ENCODE measurements at regions of chr9 and their contacts with region 1.

Region 1: GRCh38 chr9:20526500-20527319 is 95.6 kb downstream of the MLLT3 start:
- DNase-seq: no peak
- CTCF ChIP-seq: no peak

Region 2: DNA sequence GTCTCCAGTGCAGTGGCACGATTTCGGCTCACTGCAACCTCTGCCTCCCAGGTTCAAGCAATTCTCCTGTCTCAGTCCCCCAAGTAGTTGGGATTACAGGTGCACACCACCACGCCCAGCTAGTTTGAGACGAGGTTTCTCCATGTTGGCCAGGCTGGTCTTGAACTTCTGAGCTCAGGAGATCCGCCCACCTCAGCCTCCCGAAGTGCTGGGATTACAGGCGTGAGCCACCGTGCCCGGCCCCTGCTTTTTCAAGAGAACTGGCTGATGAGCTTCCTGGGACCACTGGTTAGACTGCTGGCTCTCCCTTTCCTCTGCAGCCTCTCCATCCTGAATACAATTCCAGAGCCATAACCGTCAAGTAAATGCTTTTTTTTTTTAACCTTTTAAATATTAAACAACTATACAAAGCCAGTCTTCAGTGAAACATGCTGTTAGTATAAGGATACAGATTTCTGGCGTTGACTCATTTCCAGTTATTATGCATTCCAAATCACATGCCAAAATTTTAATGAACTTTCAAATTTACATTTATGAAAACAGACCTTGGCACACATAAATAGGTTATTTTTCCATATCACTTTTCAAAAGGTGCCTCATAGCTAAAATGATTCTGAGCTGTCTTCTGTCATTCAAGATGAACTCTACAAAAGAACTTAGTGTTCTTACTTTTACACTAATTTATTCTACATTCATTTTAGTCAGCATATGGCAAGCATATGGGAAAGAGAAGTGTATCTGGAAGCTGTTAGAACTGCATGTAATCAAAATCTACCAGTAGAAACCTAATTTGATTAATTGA is 20.4 kb before region 1 on chr9:
- CTCF ChIA-PET with region 1: interaction called, 14 read pairs
- POLR2A ChIA-PET with region 1: no interaction called
- DNase-seq: no peak
- CTCF ChIP-seq: no peak

Region 3: DNA sequence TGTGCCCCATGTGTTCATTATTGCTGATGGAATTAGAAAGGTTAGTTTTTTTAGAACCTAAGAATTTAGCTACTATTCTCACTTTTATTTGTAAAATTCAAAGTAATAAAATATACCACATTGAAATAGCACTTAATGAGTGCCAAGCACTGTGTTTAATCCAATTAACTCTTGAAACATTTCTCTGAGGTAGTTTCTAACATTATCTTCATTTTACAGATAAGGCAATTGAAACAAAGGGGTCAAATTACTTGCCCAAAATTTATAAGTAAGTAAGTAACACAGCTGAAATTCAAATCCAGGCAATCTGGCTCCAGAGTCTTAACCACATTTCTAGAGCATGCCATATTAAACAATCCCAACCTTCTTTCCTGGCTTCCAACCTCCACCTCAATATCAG is 11.4 kb after region 1 on chr9:
- CTCF ChIA-PET with region 1: interaction called, 25 read pairs
- POLR2A ChIA-PET with region 1: no interaction called
- DNase-seq: no peak
- CTCF ChIP-seq: no peak